Pancreas (tissue), 10 donors: ENCODE measurements at regions of chrX and their contacts with region 1.

Region 1: GRCh38 chrX:53563324-53563723 is 123.2 kb downstream of the HUWE1 start:
- DNase-seq: no peak
- ATAC-seq: no peak
- H3K4me3 ChIP-seq: no peak overlapping the region
- H3K27ac ChIP-seq: no peak overlapping the region
- H3K4me1 ChIP-seq: no peaks in the 10 kb centered on the region
- H3K27me3 ChIP-seq: no peaks in the 10 kb centered on the region
- CTCF ChIP-seq: no peak

Region 2: DNA sequence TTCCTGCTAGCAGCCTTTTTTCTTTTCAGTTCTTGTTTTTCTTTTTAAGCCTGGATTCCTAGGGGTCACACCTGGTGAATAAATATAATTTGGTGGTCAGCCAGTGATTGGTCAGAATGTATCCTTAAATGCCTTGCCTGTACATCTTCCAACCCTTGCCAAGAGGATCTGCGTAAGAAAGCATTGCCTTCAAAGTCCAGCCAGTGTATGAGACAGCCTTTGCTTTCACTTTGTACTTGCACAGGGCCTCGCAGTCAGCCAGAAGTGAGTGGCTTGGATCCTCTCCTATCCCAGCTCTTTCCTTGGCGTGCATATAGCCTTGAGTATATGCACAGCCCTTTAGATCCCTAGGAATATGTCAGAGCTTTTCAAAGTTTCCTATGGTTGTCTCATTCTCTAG is 447.2 kb before region 1 on chrX:
- intact Hi-C with region 1: no loop called
- DNase-seq: no peak
- ATAC-seq: peak in 1 of 4 donors; percentile 35
- H3K4me3 ChIP-seq: no peak overlapping the region
- H3K27ac ChIP-seq: no peak overlapping the region
- H3K4me1 ChIP-seq: no peaks in the 10 kb centered on the region
- H3K27me3 ChIP-seq: no peaks in the 10 kb centered on the region
- CTCF ChIP-seq: no peak

Region 3: DNA sequence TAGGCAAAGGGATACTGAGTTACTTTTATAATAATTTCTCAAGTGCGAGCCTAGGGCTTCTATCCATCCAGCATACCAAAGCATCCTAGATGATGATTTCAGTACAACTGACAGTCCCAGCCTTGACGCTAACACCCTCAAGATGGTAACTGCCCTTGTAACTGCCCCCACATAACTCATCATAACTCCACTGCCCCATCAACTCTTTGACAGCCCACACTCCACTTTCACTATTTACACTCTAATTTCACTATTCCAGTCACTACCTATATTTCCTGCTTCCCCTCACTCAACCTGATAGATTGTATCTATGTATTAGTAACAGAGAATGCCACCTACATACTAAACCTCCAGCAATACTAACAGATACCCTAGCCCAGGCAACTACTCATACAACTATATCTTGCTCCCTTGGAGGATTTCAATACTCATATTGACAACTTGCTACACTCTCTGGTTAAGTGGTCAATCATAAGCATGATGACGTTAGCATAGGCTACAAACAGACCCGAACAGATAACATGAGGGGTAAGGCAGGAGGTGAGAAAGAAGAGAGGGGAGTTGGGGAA is 58.2 kb after region 1 on chrX:
- intact Hi-C with region 1: loop called in 1 of 3 experiments (anchors 10 kb)
- DNase-seq: no peak
- ATAC-seq: no peak
- H3K4me3 ChIP-seq: no peak overlapping the region
- H3K27ac ChIP-seq: no peak overlapping the region
- H3K4me1 ChIP-seq: no peaks in the 10 kb centered on the region
- H3K27me3 ChIP-seq: no peaks in the 10 kb centered on the region
- CTCF ChIP-seq: no peak